A673 (cell line): ENCODE measurements at regions of chr17 and their contacts with region 1.

Region 1: DNA sequence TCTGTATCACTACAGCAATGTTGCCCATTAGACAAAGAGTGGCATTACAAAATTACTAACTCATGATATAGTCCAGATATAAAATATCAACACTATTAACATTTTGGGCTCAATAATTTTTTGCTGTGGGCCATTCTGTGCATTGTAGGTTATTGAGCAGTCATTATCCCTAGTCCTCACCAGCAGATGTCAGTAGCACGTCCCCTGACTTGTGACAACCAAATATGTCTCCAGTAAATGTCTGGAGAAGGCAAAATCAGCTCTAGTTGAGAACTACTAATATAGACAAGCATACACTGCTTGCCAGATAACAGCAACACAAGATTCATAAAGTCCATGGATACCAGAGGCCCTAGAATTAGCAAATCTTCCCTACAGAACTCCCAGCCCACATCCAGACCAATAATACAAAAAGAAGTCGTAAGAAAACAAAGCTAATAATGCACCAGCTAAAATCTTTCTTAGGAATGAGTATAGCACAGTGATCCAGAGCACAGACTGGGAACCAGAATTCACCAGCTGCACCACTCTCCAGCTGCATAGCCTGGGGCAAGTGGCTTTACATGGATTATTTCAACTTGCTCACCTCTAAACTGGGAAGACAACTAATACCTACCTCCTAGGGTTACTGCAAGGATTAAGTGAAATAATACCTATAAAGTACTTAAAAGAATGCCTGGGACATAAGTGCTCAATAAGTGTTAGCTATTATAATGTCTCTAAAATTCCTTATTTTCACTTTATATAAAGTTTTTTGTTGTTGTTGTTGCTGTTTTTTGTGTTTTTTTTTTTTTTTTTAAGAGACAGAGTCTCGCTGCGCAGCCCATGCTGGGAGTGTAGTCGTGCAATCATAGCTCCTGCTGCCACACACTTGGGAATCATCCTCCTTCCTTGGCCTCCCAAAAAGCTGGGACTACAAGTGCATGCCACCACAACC is 23.7 kb downstream of the HELZ start:
- DNase-seq: peak; percentile 80
- H3K4me3 ChIP-seq: no peak overlapping the region
- H3K27ac ChIP-seq: peak overlapping the region; percentile 3
- H3K4me1 ChIP-seq: peaks cover 32% of the 10 kb centered on the region
- H3K27me3 ChIP-seq: no peaks in the 10 kb centered on the region
- CTCF ChIP-seq: peak; percentile 85

Region 2: GRCh38 chr17:67293251-67294203 is 72.2 kb after region 1 on chr17:
- CTCF ChIA-PET with region 1: no interaction called
- POLR2A ChIA-PET with region 1: no interaction called
- intact Hi-C with region 1: loop called (anchors 5 kb)
- DNase-seq: peak; percentile 73
- H3K4me3 ChIP-seq: no peak overlapping the region
- H3K27ac ChIP-seq: no peak overlapping the region
- H3K4me1 ChIP-seq: peaks cover 6% of the 10 kb centered on the region
- H3K27me3 ChIP-seq: no peaks in the 10 kb centered on the region
- CTCF ChIP-seq: peak; percentile 85

Region 3: DNA sequence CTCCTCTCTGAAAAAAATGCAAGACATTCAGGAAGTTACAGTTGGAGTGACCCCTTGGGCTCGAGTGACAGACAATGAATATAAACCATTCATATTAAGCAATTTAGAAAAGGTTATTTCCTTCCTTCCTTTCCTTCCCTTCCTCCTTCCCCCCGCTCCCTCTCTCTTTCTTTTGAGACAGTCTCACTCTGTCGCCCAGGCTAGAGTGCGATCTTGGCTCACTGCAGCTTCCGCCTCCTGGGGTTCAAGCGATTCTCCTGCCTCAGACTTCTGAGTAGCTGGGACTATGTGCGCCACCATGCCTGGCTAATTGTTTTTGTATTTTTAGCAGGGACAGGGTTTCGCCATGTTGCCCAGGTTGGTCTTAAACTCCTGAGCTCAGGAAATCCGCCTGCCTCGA is 131.8 kb after region 1 on chr17:
- CTCF ChIA-PET with region 1: interaction called, 14 read pairs
- POLR2A ChIA-PET with region 1: no interaction called
- intact Hi-C with region 1: loop called (anchors 10 kb)
- DNase-seq: peak; percentile 96
- H3K4me3 ChIP-seq: peak overlapping the region; percentile 5
- H3K27ac ChIP-seq: peak overlapping the region; percentile 84
- H3K4me1 ChIP-seq: peaks cover 61% of the 10 kb centered on the region
- H3K27me3 ChIP-seq: no peaks in the 10 kb centered on the region
- CTCF ChIP-seq: no peak

Region 4: DNA sequence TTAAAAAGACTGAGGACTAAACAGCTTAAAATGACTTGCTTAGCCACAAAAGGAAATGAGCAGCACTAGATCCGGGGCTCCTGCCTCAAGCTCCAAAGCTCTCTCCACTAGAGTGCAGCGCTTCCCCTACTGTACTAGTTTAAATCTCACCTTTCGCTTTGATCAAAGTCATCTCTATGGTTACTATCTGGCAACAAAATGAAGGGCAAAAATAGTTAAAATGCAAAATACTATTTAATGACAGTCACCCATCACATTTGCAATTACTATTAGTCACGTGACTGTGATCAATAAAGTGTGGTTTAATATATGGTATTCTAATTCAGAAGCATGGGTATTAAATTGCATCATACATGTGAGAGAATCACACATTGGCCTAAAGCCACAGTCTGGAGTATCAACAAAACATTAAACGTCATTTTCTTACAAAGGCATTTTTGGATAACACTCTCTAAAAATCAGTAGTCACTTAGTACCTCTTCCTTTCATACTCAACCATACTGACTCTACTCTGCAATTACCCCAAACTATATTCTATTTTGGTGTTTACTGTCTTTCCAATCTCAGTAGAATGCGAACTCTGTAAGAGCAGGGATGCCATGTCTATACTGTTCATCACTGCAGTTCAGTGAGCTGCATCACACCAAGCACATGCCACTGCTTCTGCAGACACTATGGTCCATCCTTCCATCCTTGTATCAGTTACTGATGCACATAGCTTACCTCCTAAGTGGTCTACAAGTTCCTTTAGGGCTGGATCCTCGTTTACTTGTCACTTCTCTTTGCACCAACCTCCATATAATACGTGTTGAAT is 138.8 kb after region 1 on chr17:
- CTCF ChIA-PET with region 1: no interaction called
- POLR2A ChIA-PET with region 1: no interaction called
- intact Hi-C with region 1: loop called (anchors 10 kb)
- DNase-seq: peak; percentile 77
- H3K4me3 ChIP-seq: peak overlapping the region; percentile 14
- H3K27ac ChIP-seq: peak overlapping the region; percentile 84
- H3K4me1 ChIP-seq: peaks cover 84% of the 10 kb centered on the region
- H3K27me3 ChIP-seq: no peaks in the 10 kb centered on the region
- CTCF ChIP-seq: peak; percentile 60